Calu3 (cell line): ENCODE measurements at regions of chr19 and their contacts with region 1.

Region 1: GRCh38 chr19:16111160-16111908 is at the start of gene RAB8A:
- DNase-seq: peak; percentile 96
- H3K4me3 Mint-ChIP-seq: peak within 1 kb of the TSS; percentile 84
- H3K27ac Mint-ChIP-seq: peak within 1 kb of the TSS; percentile 90
- H3K4me1 Mint-ChIP-seq: no peaks in the 10 kb centered on the region
- H3K27me3 Mint-ChIP-seq: no peaks in the 10 kb centered on the region
- CTCF ChIP-seq: peak; percentile 71
- total RNA-seq, gene RAB8A: 76.6 and 77.3 TPM in 2 replicates

Region 2: DNA sequence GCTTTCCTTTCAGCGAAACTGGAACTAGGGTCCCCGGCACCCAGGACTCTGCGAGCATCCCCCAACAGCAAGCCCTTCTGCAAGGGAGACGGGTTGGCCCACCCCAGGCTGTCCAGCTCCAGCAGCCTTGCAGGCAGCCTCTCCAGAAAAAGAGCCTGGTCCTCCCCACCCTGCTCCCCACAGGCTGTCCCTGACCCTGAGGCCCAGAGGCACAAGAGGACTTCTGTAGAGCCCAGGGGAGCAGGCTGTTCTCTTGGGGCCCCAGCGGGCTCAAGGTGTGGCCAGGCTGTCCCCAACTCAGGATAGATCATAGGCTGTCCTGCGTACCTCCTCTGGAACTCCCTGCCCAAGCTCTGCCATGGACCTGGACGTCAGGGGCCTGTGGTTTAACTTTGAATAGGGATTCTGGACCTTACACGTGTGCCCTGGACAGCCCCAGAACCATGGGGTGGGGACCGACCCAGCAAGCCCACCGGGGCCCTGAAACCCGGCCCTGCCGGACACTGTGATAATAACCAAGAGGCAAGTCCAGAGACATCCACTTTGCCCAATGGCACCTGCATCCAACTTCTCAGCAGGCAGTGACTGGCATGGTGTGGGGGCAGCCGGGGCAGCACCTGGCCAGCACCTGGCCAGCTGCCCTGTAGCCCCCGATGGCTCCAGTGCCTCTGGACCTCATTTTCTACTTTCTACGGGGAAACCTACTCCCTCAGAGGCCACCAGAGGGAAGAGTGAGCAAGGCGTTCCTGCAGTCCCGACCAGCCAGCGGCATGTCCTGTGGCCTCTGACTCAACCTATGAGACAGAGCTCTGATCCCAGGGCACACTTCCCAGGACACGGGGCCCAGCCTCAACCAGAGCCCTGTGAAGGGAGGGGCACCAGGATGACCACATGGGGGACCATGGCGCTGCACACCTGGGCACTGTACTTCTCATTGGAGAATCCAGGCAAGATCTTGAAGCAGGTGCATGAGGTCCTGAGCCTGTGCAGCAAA is 85.9 kb before region 1 on chr19:
- CTCF ChIA-PET with region 1: no interaction called
- intact Hi-C with region 1: no loop called
- DNase-seq: peak; percentile 60
- H3K4me3 Mint-ChIP-seq: no peak overlapping the region
- H3K27ac Mint-ChIP-seq: no peak overlapping the region
- H3K4me1 Mint-ChIP-seq: no peaks in the 10 kb centered on the region
- H3K27me3 Mint-ChIP-seq: no peaks in the 10 kb centered on the region
- CTCF ChIP-seq: peak; percentile 57

Region 3: DNA sequence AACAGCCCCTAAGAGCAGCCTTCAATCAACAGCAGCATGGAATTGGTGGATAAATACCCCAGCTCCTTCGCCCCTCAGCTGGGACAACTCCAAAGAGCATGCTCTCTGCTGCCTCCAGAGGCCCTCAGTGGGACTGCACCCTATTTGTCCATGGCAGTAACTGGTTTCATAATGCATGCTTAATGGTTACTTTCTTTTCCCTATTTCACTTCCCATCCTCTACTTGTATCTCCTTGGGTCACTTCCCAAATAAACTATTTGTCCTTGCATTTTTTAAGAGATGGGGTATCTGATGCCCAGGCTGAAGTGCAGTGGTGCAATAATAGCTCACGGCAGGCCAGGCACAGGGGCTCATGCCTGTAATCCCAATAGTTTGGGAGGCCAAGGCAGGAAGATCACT is 48.5 kb before region 1 on chr19:
- CTCF ChIA-PET with region 1: interaction called, 3 read pairs
- intact Hi-C with region 1: loop called (anchors 10 kb)
- DNase-seq: peak; percentile 56
- H3K4me3 Mint-ChIP-seq: no peak overlapping the region
- H3K27ac Mint-ChIP-seq: no peak overlapping the region
- H3K4me1 Mint-ChIP-seq: peaks cover 7% of the 10 kb centered on the region
- H3K27me3 Mint-ChIP-seq: no peaks in the 10 kb centered on the region
- CTCF ChIP-seq: peak; percentile 79

Region 4: GRCh38 chr19:16088351-16089009 is 22.9 kb before region 1 on chr19:
- CTCF ChIA-PET with region 1: interaction called, 4 read pairs
- intact Hi-C with region 1: loop called (anchors 1 kb)
- DNase-seq: peak; percentile 78
- H3K4me3 Mint-ChIP-seq: peak overlapping the region; percentile 55
- H3K27ac Mint-ChIP-seq: peak overlapping the region; percentile 95
- H3K4me1 Mint-ChIP-seq: peaks cover 34% of the 10 kb centered on the region
- H3K27me3 Mint-ChIP-seq: no peaks in the 10 kb centered on the region
- CTCF ChIP-seq: no peak

Region 5: GRCh38 chr19:16160943-16161560 is 49.7 kb after region 1 on chr19:
- CTCF ChIA-PET with region 1: no interaction called
- intact Hi-C with region 1: no loop called
- DNase-seq: peak; percentile 38
- H3K4me3 Mint-ChIP-seq: peak overlapping the region; percentile 44
- H3K27ac Mint-ChIP-seq: peak overlapping the region; percentile 85
- H3K4me1 Mint-ChIP-seq: peaks cover 10% of the 10 kb centered on the region
- H3K27me3 Mint-ChIP-seq: no peaks in the 10 kb centered on the region
- CTCF ChIP-seq: no peak